MCF 10A (cell line): ENCODE measurements at regions of chr20 and their contacts with region 1.

Region 1: DNA sequence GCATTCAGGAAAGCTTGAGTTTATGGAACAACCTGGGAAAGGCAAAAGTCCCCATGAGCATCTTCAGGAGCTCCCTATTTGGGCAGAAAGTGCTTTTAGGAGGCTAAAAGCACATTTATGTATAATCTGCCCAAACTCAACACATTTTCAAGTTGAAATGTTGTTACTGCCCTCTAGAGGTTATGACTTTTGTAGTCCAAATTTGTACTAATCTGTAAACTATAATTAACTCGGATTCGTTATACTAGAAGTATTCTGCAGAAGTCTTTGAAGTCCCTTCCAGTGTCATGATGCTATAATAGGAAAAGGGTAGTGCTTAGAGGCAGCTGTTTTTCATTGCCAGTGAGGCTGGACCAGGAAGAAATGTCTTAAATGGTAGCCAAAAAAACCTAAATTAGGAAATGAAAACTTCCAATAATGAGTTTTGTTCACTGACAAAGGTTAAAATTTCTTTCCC is 44.8 kb upstream of the EMILIN3 start:
- DNase-seq: peak; percentile 9
- H3K4me3 Mint-ChIP-seq: no peak overlapping the region
- H3K27ac Mint-ChIP-seq: no peak overlapping the region
- H3K4me1 Mint-ChIP-seq: no peaks in the 10 kb centered on the region
- H3K27me3 Mint-ChIP-seq: no peaks in the 10 kb centered on the region
- CTCF ChIP-seq: peak; percentile 41

Region 2: GRCh38 chr20:40414843-40415615 is 996.4 kb before region 1 on chr20:
- CTCF ChIA-PET with region 1: no interaction called
- POLR2A ChIA-PET with region 1: no interaction called
- intact Hi-C with region 1: no loop called
- DNase-seq: no peak
- H3K4me3 Mint-ChIP-seq: no peak overlapping the region
- H3K27ac Mint-ChIP-seq: no peak overlapping the region
- H3K4me1 Mint-ChIP-seq: peaks cover 18% of the 10 kb centered on the region
- H3K27me3 Mint-ChIP-seq: no peaks in the 10 kb centered on the region
- CTCF ChIP-seq: no peak

Region 3: GRCh38 chr20:41395667-41396664 is 15.5 kb before region 1 on chr20:
- CTCF ChIA-PET with region 1: interaction called, 36 read pairs
- POLR2A ChIA-PET with region 1: no interaction called
- intact Hi-C with region 1: no loop called
- DNase-seq: no peak
- H3K4me3 Mint-ChIP-seq: no peak overlapping the region
- H3K27ac Mint-ChIP-seq: no peak overlapping the region
- H3K4me1 Mint-ChIP-seq: peaks cover 7% of the 10 kb centered on the region
- H3K27me3 Mint-ChIP-seq: no peaks in the 10 kb centered on the region
- CTCF ChIP-seq: no peak

Region 4: DNA sequence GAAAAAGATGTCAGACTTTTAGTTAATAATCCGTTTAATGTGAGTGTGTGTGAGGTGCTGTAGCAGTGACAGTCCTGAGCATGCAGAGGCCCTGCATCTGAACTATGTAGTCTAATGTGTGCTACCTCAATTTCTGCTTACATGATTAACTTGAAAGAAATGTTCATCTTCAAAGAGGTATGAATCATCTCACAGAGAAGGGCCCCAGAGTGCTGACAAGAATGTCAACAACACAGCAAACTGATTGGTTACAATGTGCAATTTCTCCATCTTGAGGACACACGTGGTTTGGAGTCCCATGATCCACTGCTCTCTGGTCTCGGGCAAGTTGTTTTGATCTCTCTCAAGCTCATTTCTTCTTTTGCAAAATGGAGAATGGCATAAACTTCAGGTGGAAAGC is 16.9 kb after region 1 on chr20:
- CTCF ChIA-PET with region 1: interaction called, 34 read pairs
- POLR2A ChIA-PET with region 1: no interaction called
- intact Hi-C with region 1: no loop called
- DNase-seq: peak; percentile 56
- H3K4me3 Mint-ChIP-seq: no peak overlapping the region
- H3K27ac Mint-ChIP-seq: peak overlapping the region; percentile 79
- H3K4me1 Mint-ChIP-seq: peaks cover 9% of the 10 kb centered on the region
- H3K27me3 Mint-ChIP-seq: no peaks in the 10 kb centered on the region
- CTCF ChIP-seq: no peak

Region 5: GRCh38 chr20:41553142-41553880 is 141.9 kb after region 1 on chr20:
- CTCF ChIA-PET with region 1: no interaction called
- POLR2A ChIA-PET with region 1: no interaction called
- intact Hi-C with region 1: no loop called
- DNase-seq: no peak
- H3K4me3 Mint-ChIP-seq: no peak overlapping the region
- H3K27ac Mint-ChIP-seq: no peak overlapping the region
- H3K4me1 Mint-ChIP-seq: peaks cover 5% of the 10 kb centered on the region
- H3K27me3 Mint-ChIP-seq: no peaks in the 10 kb centered on the region
- CTCF ChIP-seq: no peak